ENCODE measurements at regions of chr11 and their contacts with region 1.

Region 1: GRCh38 chr11:6234387-6235107 is at the start of gene FHIP1B:
- DNase-seq: peak; percentile 97 to 100 (median 99)
- ATAC-seq: peak; percentile 90
- H3K4me3 ChIP-seq: peak within 1 kb of the TSS; percentile 90
- H3K4me3 Mint-ChIP-seq: peak within 1 kb of the TSS; percentile 98
- H3K27ac ChIP-seq: peak within 1 kb of the TSS; percentile 68 to 85
- H3K27ac Mint-ChIP-seq: peak within 1 kb of the TSS; percentile 87
- H3K4me1 ChIP-seq: peaks cover 24% of the 10 kb centered on the region
- H3K4me1 Mint-ChIP-seq: peaks cover 49% of the 10 kb centered on the region
- H3K27me3 ChIP-seq: no peaks in the 10 kb centered on the region
- H3K27me3 Mint-ChIP-seq: no peaks in the 10 kb centered on the region
- CTCF ChIP-seq: no peak
- total RNA-seq, gene FHIP1B: 26.7 to 27.7 TPM

Region 2: GRCh38 chr11:4607781-4608666 is 1626.5 kb before region 1 on chr11 and contains the start of gene TRIM68:
- CTCF ChIA-PET with region 1: no interaction called
- POLR2A ChIA-PET with region 1: interaction called, 3 read pairs
- intact Hi-C with region 1: loop called in 1 of 2 experiments (anchors 5 kb)
- DNase-seq: peak; percentile 88 to 96 (median 92)
- ATAC-seq: peak; percentile 99
- H3K4me3 ChIP-seq: peak within 1 kb of the TSS; percentile 81
- H3K4me3 Mint-ChIP-seq: peak within 1 kb of the TSS; percentile 87
- H3K27ac ChIP-seq: peak within 1 kb of the TSS; percentile 74 to 79
- H3K27ac Mint-ChIP-seq: peak within 1 kb of the TSS; percentile 86
- H3K4me1 ChIP-seq: peaks cover 23% of the 10 kb centered on the region
- H3K4me1 Mint-ChIP-seq: peaks cover 53% of the 10 kb centered on the region
- H3K27me3 ChIP-seq: no peaks in the 10 kb centered on the region
- H3K27me3 Mint-ChIP-seq: no peaks in the 10 kb centered on the region
- CTCF ChIP-seq: no peak
- total RNA-seq, gene TRIM68: 4.1 to 5.4 TPM

Region 3: DNA sequence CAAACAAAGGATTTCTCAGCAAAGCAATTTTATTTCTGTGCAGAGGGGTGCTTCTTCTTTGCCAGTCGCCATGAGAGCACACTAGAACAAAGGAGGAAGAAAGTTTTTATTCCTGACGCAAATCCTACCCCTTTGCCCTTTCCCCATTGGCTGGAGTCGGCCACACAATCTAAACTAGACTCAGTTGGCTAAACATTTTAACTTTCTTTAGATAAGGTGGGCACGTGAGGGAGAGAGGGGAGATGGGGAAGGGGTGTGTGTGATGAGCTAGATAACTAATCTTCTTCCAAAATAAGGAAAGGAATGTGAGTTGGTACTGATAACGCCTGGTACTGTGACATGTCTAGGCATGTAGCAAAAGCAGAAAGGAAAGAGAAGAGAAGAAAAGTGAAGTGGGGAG is 544.3 kb before region 1 on chr11:
- CTCF ChIA-PET with region 1: no interaction called
- POLR2A ChIA-PET with region 1: no interaction called
- intact Hi-C with region 1: loop called (anchors 10 kb)
- DNase-seq: peak in 2 of 14 experiments; percentile 13 to 15
- ATAC-seq: no peak
- H3K4me3 ChIP-seq: peak overlapping the region; percentile 72
- H3K4me3 Mint-ChIP-seq: peak overlapping the region; percentile 92
- H3K27ac ChIP-seq: peak overlapping the region; percentile 77 to 78
- H3K27ac Mint-ChIP-seq: peak overlapping the region; percentile 91
- H3K4me1 ChIP-seq: peaks cover 44% of the 10 kb centered on the region
- H3K4me1 Mint-ChIP-seq: peaks cover 66% of the 10 kb centered on the region
- H3K27me3 ChIP-seq: no peaks in the 10 kb centered on the region
- H3K27me3 Mint-ChIP-seq: no peaks in the 10 kb centered on the region
- CTCF ChIP-seq: no peak

Region 4: DNA sequence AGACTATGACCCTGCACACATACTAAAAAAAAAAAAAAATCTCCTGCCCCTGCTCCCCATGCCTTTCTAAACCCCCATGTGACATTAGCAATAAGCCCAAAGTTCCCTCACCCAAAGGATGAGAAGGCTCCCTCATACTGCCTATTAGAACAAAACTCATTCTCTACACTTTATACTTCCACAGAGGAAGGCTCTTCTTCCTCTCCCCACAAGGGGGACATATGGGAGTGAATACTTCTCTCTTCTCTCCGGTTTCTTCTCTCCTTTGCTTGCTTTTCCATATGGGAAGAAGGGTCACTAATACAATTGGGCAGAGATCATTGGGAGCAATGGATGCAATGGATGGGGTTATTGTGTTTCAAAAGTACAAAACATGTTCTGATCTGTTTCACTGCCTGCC is 251.1 kb before region 1 on chr11:
- CTCF ChIA-PET with region 1: no interaction called
- POLR2A ChIA-PET with region 1: no interaction called
- intact Hi-C with region 1: no loop called
- DNase-seq: no peak
- ATAC-seq: no peak
- H3K4me3 ChIP-seq: no peak overlapping the region
- H3K4me3 Mint-ChIP-seq: no peak overlapping the region
- H3K27ac ChIP-seq: no peak overlapping the region
- H3K27ac Mint-ChIP-seq: no peak overlapping the region
- H3K4me1 ChIP-seq: no peaks in the 10 kb centered on the region
- H3K4me1 Mint-ChIP-seq: no peaks in the 10 kb centered on the region
- H3K27me3 ChIP-seq: no peaks in the 10 kb centered on the region
- H3K27me3 Mint-ChIP-seq: peaks cover 32% of the 10 kb centered on the region
- CTCF ChIP-seq: no peak

Region 5: DNA sequence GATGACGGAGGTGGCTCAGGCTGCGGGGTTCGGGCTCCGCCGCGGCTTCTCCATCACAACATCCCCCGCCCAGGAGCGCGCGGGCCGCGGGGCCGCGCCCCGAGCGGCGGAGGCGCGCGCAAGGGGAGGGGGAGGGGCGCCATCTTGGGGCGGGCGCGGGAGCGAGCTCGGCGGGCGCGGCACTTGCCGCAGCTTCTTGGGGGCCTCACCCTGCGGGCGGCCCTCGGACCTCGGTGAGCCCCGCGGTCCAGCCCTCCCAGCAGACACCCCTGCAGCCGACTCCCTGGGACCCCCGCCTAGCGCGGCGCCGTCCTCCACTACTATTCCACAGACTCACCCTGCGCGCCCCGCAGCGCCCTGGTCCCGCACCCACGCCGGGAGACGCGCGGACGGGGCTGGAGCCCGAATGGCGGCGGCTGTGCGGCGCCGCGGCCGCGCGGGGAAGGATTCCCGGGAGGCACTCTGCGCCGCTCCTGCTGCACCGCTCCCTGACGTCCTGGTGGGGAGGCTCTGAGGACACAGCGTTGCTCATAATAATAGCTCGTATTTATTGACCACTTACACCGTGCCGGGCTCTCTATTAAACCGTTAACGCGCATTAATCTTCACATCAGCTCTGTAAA is 184.6 kb after region 1 on chr11 and contains the start of gene APBB1:
- CTCF ChIA-PET with region 1: no interaction called
- POLR2A ChIA-PET with region 1: no interaction called
- intact Hi-C with region 1: loop called in 1 of 2 experiments (anchors 10 kb)
- DNase-seq: peak; percentile 61 to 91 (median 74)
- ATAC-seq: peak; percentile 68
- H3K4me3 ChIP-seq: peak within 1 kb of the TSS; percentile 70
- H3K4me3 Mint-ChIP-seq: peak within 1 kb of the TSS; percentile 91
- H3K27ac ChIP-seq: peak within 1 kb of the TSS; percentile 49 to 92
- H3K27ac Mint-ChIP-seq: peak within 1 kb of the TSS; percentile 89
- H3K4me1 ChIP-seq: peaks cover 49% of the 10 kb centered on the region
- H3K4me1 Mint-ChIP-seq: peaks cover 10% of the 10 kb centered on the region
- H3K27me3 ChIP-seq: no peaks in the 10 kb centered on the region
- H3K27me3 Mint-ChIP-seq: peaks cover 7% of the 10 kb centered on the region
- CTCF ChIP-seq: no peak
- total RNA-seq, gene APBB1: 182 to 184 TPM

Region 6: GRCh38 chr11:6603287-6604080 is 368.9 kb after region 1 on chr11 and contains the starts of genes ILK and RRP8:
- CTCF ChIA-PET with region 1: no interaction called
- POLR2A ChIA-PET with region 1: no interaction called
- intact Hi-C with region 1: loop called in 1 of 2 experiments (anchors 5 kb)
- DNase-seq: peak; percentile 73 to 94 (median 83)
- ATAC-seq: peak; percentile 75
- H3K4me3 ChIP-seq: peak within 1 kb of the TSS; percentile 78
- H3K4me3 Mint-ChIP-seq: no peak within 1 kb of the TSS
- H3K27ac ChIP-seq: peak within 1 kb of the TSS; percentile 81 to 87
- H3K27ac Mint-ChIP-seq: no peak within 1 kb of the TSS
- H3K4me1 ChIP-seq: peaks cover 73% of the 10 kb centered on the region
- H3K4me1 Mint-ChIP-seq: peaks cover 22% of the 10 kb centered on the region
- H3K27me3 ChIP-seq: no peaks in the 10 kb centered on the region
- H3K27me3 Mint-ChIP-seq: no peaks in the 10 kb centered on the region
- CTCF ChIP-seq: no peak
- total RNA-seq, gene ILK: 19.2 to 21.0 TPM
- total RNA-seq, gene RRP8: 25.7 to 27.3 TPM

Region 7: GRCh38 chr11:7513234-7514098 is 1278.9 kb after region 1 on chr11 and contains the start of gene PPFIBP2:
- CTCF ChIA-PET with region 1: no interaction called
- POLR2A ChIA-PET with region 1: no interaction called
- intact Hi-C with region 1: loop called in 1 of 2 experiments (anchors 5 kb)
- DNase-seq: peak; percentile 70 to 91 (median 80)
- ATAC-seq: peak; percentile 86
- H3K4me3 ChIP-seq: peak within 1 kb of the TSS; percentile 99
- H3K4me3 Mint-ChIP-seq: peak within 1 kb of the TSS; percentile 99
- H3K27ac ChIP-seq: peak within 1 kb of the TSS; percentile 81 to 84
- H3K27ac Mint-ChIP-seq: peak within 1 kb of the TSS; percentile 97
- H3K4me1 ChIP-seq: peaks cover 18% of the 10 kb centered on the region
- H3K4me1 Mint-ChIP-seq: peaks cover 64% of the 10 kb centered on the region
- H3K27me3 ChIP-seq: no peaks in the 10 kb centered on the region
- H3K27me3 Mint-ChIP-seq: no peaks in the 10 kb centered on the region
- CTCF ChIP-seq: peak; percentile 92
- total RNA-seq, gene PPFIBP2: 27.0 to 35.9 TPM

Measured in CD4-positive, alpha-beta T cell (primary cell).